ENCODE measurements at regions of chr13 and their contacts with region 1.

Region 1: GRCh38 chr13:73754727-73755292 is 379.4 kb downstream of the KLF12 start:
- DNase-seq: no peak
- ATAC-seq: no peak
- H3K4me3 Mint-ChIP-seq: no peak overlapping the region
- H3K27ac Mint-ChIP-seq: no peak overlapping the region
- H3K4me1 Mint-ChIP-seq: peaks cover 4% of the 10 kb centered on the region
- H3K27me3 Mint-ChIP-seq: no peaks in the 10 kb centered on the region
- CTCF ChIP-seq: peak; percentile 94

Region 2: DNA sequence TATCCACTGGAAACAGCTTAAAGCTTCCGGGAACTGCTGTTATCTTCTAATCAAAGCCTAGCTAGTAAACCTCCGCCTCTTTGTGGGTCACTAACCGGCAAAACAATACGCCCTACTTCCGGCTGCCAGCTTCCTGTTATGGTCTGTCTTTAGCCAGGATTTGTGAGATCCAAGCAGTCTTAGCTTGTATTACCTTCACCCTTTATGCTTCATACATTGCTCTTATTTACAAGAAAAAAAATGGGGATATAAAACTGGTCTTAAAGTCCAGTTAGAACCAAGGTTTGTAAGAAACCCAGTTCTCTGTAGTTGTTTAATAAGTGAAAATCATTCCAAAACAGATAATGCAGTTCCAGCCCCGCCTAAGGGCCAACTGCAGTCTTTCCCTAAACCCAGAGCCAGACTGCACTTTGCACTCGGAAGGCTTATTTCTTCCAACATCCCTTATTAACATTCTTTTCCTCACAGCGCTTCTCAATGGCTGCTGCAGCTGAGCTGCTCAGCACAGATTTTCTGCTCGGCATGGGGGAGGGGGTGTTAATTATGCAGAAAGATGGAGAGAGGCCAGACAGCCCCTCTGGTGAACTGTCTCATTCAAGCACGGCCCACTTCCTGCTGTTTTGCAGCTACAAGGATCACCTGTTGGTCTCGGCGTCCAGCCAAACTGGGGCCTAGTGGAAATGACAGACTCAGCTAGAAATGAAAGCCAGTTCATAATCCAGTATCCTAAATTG is 11.0 kb after region 1 on chr13:
- CTCF ChIA-PET with region 1: interaction called, 27 read pairs
- POLR2A ChIA-PET with region 1: no interaction called
- intact Hi-C with region 1: loop called (anchors 1 kb)
- DNase-seq: peak; percentile 19
- ATAC-seq: peak; percentile 80
- H3K4me3 Mint-ChIP-seq: peak overlapping the region; percentile 63
- H3K27ac Mint-ChIP-seq: peak overlapping the region; percentile 92
- H3K4me1 Mint-ChIP-seq: peaks cover 72% of the 10 kb centered on the region
- H3K27me3 Mint-ChIP-seq: no peaks in the 10 kb centered on the region
- CTCF ChIP-seq: no peak

Region 3: GRCh38 chr13:73835138-73835721 is 80.4 kb after region 1 on chr13:
- CTCF ChIA-PET with region 1: interaction called, 3 read pairs
- POLR2A ChIA-PET with region 1: no interaction called
- intact Hi-C with region 1: loop called (anchors 5 kb)
- DNase-seq: no peak
- ATAC-seq: peak; percentile 67
- H3K4me3 Mint-ChIP-seq: no peak overlapping the region
- H3K27ac Mint-ChIP-seq: no peak overlapping the region
- H3K4me1 Mint-ChIP-seq: peaks cover 9% of the 10 kb centered on the region
- H3K27me3 Mint-ChIP-seq: no peaks in the 10 kb centered on the region
- CTCF ChIP-seq: no peak

Region 4: GRCh38 chr13:73849292-73849691 is 94.5 kb after region 1 on chr13:
- CTCF ChIA-PET with region 1: no interaction called
- POLR2A ChIA-PET with region 1: no interaction called
- intact Hi-C with region 1: no loop called
- DNase-seq: no peak
- ATAC-seq: peak; percentile 45
- H3K4me3 Mint-ChIP-seq: no peak overlapping the region
- H3K27ac Mint-ChIP-seq: no peak overlapping the region
- H3K4me1 Mint-ChIP-seq: peaks cover 30% of the 10 kb centered on the region
- H3K27me3 Mint-ChIP-seq: no peaks in the 10 kb centered on the region
- CTCF ChIP-seq: no peak

Region 5: DNA sequence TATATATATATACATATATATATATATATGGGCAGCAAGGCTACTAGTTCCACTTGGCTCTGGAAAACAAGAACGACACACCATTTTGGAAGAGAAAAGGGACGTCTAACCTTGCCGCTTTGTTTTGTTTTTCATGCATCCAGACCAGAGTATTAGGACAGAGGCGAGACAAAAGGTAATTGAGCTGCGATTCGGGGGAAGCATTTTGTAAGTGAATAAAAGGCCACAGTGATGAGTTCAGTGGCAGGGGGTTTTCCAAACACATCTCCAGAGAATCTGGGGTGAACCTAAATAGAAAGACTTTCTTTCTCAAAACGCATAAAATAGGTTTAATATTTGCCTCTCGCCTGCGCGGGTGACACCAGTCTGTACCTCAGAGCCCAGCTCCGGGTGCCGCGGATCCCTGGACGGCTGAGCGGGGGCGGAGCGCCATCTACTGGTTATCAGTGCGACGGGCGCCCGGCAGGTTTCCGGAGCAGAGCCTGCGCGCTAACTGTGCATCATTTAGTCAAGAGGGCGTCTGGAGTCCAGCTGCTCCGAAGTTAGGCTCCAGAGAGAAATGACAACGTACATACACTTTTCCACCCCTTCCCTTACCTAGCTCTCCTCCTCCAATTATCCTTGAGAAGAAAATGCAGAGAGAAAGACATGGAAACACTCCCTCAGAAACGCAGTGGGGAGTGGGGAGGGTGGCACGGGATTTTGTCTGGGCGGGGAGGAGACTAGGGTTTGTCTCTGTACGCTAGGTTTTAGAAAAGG is 1464.8 kb after region 1 on chr13:
- CTCF ChIA-PET with region 1: interaction called, 8 read pairs
- POLR2A ChIA-PET with region 1: no interaction called
- intact Hi-C with region 1: loop called (anchors 1 kb)
- DNase-seq: peak; percentile 65
- ATAC-seq: peak; percentile 83
- H3K4me3 Mint-ChIP-seq: peak overlapping the region; percentile 36
- H3K27ac Mint-ChIP-seq: no peak overlapping the region
- H3K4me1 Mint-ChIP-seq: peaks cover 6% of the 10 kb centered on the region
- H3K27me3 Mint-ChIP-seq: peaks cover 18% of the 10 kb centered on the region
- CTCF ChIP-seq: peak; percentile 69

Region 6: DNA sequence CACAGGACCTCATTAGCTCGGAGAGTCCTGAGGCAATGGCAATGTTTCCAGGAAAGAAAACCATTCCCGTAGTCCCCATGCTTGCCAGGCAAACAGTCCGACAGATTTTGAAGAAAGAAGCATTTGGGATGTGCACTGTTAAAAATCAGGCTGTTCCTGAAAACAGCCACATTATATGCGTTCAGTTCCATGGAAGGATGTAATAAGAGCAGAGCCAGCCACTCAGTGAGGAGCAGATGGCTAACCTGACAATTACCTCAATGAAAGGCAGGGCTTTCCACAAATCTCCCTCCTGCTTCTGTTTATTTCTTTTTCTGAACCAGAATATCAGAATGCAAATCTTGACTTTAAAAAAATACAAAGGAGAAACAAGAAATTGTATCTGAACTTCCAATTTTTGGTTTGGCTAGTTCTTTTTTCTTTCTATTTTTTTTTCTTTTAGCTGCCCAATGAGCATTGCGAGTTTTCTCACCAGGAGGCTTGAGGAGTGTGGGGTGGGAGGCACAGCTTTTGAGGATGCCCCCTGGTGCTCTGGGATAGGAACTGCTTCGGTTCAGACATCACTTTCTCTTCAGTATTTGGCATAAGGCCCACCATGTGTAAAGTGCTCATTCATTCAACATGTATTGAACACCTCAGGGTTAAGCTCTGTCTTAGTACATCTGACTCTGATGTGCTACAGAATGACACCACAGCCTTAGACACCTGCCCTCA is 1602.9 kb after region 1 on chr13:
- CTCF ChIA-PET with region 1: no interaction called
- POLR2A ChIA-PET with region 1: no interaction called
- intact Hi-C with region 1: loop called (anchors 2 kb)
- DNase-seq: no peak
- ATAC-seq: peak; percentile 92
- H3K4me3 Mint-ChIP-seq: no peak overlapping the region
- H3K27ac Mint-ChIP-seq: no peak overlapping the region
- H3K4me1 Mint-ChIP-seq: no peaks in the 10 kb centered on the region
- H3K27me3 Mint-ChIP-seq: peaks cover 1% of the 10 kb centered on the region
- CTCF ChIP-seq: no peak

Measured in activated B cell treated with CpG ODN at 0.5 μM for 24 hours (primary cell).